Heart right ventricle (tissue), 16 donors: ENCODE measurements at regions of chr17 and their contacts with region 1.

Region 1: GRCh38 chr17:21043286-21044232 is 748 bp upstream of the USP22 start:
- DNase-seq: peak; percentile 98 to 99
- ATAC-seq: peak; percentile 93 to 98 (median 96)
- H3K4me3 ChIP-seq: peak overlapping the region; percentile 51 to 96 (median 72)
- H3K27ac ChIP-seq: peak overlapping the region; percentile 89 to 100 (median 96)
- H3K4me1 ChIP-seq: peaks cover 2 to 39% (median 34%) of the 10 kb centered on the region in 9 donors
- H3K27me3 ChIP-seq: no peaks in the 10 kb centered on the region
- CTCF ChIP-seq: peak; percentile 77 to 99 (median 89)

Region 2: DNA sequence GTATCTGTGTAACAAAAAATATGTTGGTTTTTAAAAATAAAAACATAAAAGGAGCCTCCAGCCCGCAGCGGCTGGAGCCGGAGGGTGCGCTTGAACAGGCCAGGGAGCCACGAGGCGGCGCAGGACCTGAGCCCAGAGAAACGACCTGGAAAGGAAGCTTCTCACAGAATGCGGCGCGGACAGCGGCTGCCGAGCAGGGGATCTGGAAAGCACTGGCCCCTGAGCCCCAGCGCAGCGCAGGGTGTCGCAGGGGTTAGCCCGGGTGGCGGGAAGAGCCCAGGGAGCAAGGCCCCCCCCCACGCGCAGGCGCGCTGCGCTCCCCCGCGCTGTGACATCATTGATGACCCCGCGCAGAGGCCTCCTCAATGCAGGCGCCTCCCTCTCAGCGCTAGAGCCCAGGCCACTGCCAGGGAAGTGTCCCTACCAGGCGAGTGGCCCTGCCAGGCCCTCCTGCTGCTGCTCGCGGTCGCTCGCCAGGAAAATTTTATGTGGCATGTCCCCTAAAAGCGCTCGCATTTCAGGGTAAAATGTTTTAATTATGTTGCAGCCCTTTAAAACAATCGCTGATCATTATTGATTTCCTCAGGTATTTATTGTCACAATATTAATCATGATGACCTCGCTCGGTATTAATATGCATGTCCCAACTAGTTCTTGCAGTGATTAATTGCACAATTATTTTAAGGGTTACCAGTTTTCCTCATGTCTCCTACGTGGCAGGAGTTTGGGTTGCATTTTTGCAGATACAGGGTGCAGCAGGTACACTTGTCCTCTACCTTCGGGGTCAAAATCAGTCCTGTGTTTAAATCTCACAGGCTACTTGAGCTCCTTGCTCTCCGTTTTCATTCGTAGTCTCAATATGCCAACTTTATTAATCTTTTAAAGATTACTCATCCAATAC is 134.9 kb before region 1 on chr17:
- intact Hi-C with region 1: loop called in 1 of 10 experiments (anchors 1 kb)
- DNase-seq: peak; percentile 92 to 94
- ATAC-seq: peak; percentile 100
- H3K4me3 ChIP-seq: peak overlapping the region in 9 of 10 donors; percentile 32 to 63 (median 54)
- H3K27ac ChIP-seq: peak overlapping the region; percentile 52 to 94 (median 88)
- H3K4me1 ChIP-seq: peaks cover 0 to 15% (median 10%) of the 10 kb centered on the region in 9 donors
- H3K27me3 ChIP-seq: peaks cover 0 to 4% (median 0%) of the 10 kb centered on the region in 7 donors
- CTCF ChIP-seq: peak; percentile 13 to 83 (median 58)

Region 3: DNA sequence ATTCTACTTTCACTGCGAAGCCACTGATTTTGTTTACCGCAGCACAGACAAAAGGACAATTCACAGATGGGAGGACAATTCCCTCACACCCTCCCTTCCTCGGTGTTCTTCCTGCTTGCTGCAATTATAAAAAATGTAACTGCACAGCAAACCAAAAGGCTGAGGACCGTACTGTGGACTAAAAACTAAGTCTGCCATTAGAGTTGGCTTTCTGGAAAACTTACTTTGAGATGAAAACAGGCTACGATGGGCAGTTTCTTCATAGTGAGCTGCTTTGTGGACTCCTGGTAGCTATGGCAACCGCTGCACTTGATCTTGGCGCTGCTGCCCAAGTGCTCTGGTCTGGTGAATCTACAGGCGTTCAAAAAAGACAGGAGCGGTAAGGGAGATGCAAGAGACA is 35.9 kb before region 1 on chr17:
- intact Hi-C with region 1: no loop called
- DNase-seq: no peak
- ATAC-seq: no peak
- H3K4me3 ChIP-seq: no peak overlapping the region
- H3K27ac ChIP-seq: peak overlapping the region in 1 of 10 donors; percentile 24
- H3K4me1 ChIP-seq: peaks cover 0 to 44% (median 7%) of the 10 kb centered on the region in 9 donors
- H3K27me3 ChIP-seq: no peaks in the 10 kb centered on the region
- CTCF ChIP-seq: no peak

Region 4: DNA sequence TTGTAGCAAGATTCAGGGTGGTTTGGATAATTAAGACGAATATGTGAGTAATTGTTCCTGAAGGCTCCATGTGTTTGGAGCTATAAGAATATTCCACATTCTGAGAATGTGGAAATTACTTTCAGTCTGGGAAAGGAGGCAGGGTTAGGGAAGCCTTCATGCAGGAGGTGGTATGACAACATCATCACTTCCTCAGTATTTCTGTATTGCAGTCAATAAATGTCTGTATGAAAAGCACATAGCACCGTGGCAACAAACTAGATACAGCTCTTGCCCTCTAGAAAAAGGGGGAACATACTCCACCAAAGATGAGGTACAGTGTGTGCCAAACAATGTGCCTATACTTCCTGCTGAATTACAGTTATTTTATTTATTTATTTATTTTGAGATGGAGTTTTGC is 57.1 kb after region 1 on chr17:
- intact Hi-C with region 1: loop called in 1 of 10 experiments (anchors 10 kb)
- DNase-seq: no peak
- ATAC-seq: no peak
- H3K4me3 ChIP-seq: no peak overlapping the region
- H3K27ac ChIP-seq: no peak overlapping the region
- H3K4me1 ChIP-seq: peaks cover 0 to 14% (median 13%) of the 10 kb centered on the region in 9 donors
- H3K27me3 ChIP-seq: no peaks in the 10 kb centered on the region
- CTCF ChIP-seq: no peak

Region 5: DNA sequence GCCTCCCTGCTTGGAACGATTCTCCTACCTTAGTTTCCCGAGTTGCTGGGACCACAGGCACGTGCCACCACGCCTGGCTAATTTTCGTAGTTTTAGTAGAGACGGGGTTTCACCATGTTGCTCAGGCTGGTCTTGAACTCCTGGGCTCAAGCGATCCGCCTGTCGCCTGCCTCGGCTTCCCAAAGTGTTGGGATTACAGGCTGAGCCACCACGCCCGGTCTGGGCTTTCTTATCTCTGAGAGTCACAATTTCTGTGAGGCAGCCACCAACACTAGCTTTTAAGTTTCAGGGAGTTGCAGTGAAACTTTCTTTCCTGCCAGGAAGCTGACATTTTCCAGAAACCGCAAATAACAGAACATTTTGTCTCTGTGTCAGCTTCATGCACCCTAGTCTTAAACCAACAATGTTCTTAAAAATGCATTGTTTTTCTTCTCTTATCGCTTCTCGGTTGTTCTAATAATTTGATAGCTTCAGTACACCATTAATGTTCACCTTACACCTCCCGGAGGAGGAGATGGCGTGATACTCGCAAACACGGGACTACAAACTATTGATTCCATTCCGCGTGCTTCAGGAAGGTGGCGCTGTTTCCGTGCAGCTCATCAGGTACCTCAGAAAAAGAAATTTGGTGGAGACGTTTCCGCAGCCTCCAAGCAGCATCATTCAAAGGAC is 75.8 kb after region 1 on chr17:
- intact Hi-C with region 1: loop called in 1 of 10 experiments (anchors 2 kb)
- DNase-seq: peak; percentile 45 to 76
- ATAC-seq: peak; percentile 67 to 93 (median 78)
- H3K4me3 ChIP-seq: peak overlapping the region in 3 of 10 donors; percentile 8 to 23 (median 17)
- H3K27ac ChIP-seq: peak overlapping the region in 5 of 10 donors; percentile 10 to 55 (median 21)
- H3K4me1 ChIP-seq: peaks cover 0 to 22% (median 7%) of the 10 kb centered on the region in 9 donors
- H3K27me3 ChIP-seq: peaks cover 0 to 4% (median 0%) of the 10 kb centered on the region in 7 donors
- CTCF ChIP-seq: peak; percentile 63 to 87 (median 83)

Region 6: GRCh38 chr17:21252796-21253645 is 209.5 kb after region 1 on chr17 and contains the start of gene NATD1:
- intact Hi-C with region 1: loop called in 1 of 10 experiments (anchors 10 kb)
- DNase-seq: peak; percentile 86 to 90
- ATAC-seq: peak; percentile 64 to 90 (median 84)
- H3K4me3 ChIP-seq: peak within 1 kb of the TSS; percentile 49 to 82 (median 64)
- H3K27ac ChIP-seq: peak within 1 kb of the TSS; percentile 68 to 88 (median 78)
- H3K4me1 ChIP-seq: peaks cover 0 to 54% (median 37%) of the 10 kb centered on the region in 9 donors
- H3K27me3 ChIP-seq: no peaks in the 10 kb centered on the region
- CTCF ChIP-seq: no peak
- total RNA-seq, gene NATD1: 11.9 to 23.1 (median 19.6) TPM

Region 7: GRCh38 chr17:21284319-21285163 is 241.0 kb after region 1 on chr17 and contains the start of gene MAP2K3:
- intact Hi-C with region 1: loop called in 3 of 10 experiments (anchors 5 to 10 kb)
- DNase-seq: peak; percentile 99
- ATAC-seq: peak; percentile 79 to 91 (median 86)
- H3K4me3 ChIP-seq: peak within 1 kb of the TSS; percentile 67 to 99 (median 97)
- H3K27ac ChIP-seq: peak within 1 kb of the TSS; percentile 83 to 99 (median 96)
- H3K4me1 ChIP-seq: peaks cover 35 to 71% (median 49%) of the 10 kb centered on the region in 9 donors
- H3K27me3 ChIP-seq: no peaks in the 10 kb centered on the region
- CTCF ChIP-seq: peak in 1 of 9 donors; percentile 0
- total RNA-seq, gene MAP2K3: 28.9 to 71.6 (median 60.4) TPM